Astrocyte of the cerebellum (primary cell): ENCODE measurements at regions of chr5 and their contacts with region 1.

Region 1: GRCh38 chr5:2739360-2740050 is 12.0 kb downstream of the IRX2 start:
- DNase-seq: no peak
- H3K4me3 ChIP-seq: peak overlapping the region; percentile 44
- CTCF ChIP-seq: no peak

Region 2: GRCh38 chr5:2701592-2701991 is 37.9 kb before region 1 on chr5:
- in situ Hi-C with region 1: no loop called
- DNase-seq: no peak
- H3K4me3 ChIP-seq: no peak overlapping the region
- CTCF ChIP-seq: peak; percentile 11

Region 3: GRCh38 chr5:2848651-2849050 is 109.1 kb after region 1 on chr5:
- in situ Hi-C with region 1: no loop called
- DNase-seq: no peak
- H3K4me3 ChIP-seq: no peak overlapping the region
- CTCF ChIP-seq: peak; percentile 46

Region 4: DNA sequence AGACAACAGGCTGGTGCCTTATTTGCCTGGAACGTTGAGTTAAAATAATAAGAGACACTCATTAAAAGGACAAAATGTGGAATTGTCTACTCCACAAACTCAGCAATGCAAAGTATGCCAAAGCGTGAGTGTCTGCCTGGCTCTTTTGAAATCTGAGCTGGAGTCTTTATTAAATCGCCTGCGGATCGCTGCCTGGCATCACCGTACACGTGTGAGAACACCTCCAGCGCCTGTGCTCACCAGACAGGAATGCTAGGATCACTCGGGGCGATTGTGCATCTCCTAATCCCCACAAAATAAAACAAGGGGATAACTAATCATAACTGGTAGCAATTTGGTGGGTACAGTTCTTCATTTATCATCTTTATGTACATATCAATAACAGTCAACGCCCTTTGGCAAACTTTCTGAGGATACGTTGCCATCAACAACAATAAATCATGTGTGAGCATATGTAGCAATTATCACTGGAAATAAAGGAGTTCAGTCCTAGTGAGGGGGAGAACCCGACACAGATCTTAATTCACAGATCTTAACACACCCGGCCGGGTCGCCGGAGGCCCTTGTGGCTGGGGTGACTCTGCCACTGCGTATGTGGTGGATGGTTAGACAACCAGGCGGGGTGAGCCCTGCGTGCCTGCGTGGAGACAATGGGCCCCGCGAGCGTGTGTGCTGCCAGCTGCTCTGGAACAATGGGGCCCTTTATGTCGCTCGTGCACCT is 571.2 kb after region 1 on chr5:
- in situ Hi-C with region 1: loop called (anchors 25 kb)
- DNase-seq: peak; percentile 81
- H3K4me3 ChIP-seq: peak overlapping the region; percentile 4
- CTCF ChIP-seq: no peak

Region 5: GRCh38 chr5:3602785-3603502 is 863.4 kb after region 1 on chr5:
- in situ Hi-C with region 1: loop called (anchors 25 kb)
- DNase-seq: no peak
- H3K4me3 ChIP-seq: peak overlapping the region; percentile 70
- CTCF ChIP-seq: peak; percentile 66